Mammary epithelial cell (primary cell): ENCODE measurements at regions of chr19 and their contacts with region 1.

Region 1: GRCh38 chr19:33373701-33374421 is at the start of gene CEBPG:
- DNase-seq: peak; percentile 58
- H3K4me3 ChIP-seq: peak within 1 kb of the TSS; percentile 77 to 98 (median 96)
- H3K27ac ChIP-seq: peak within 1 kb of the TSS; percentile 96
- H3K4me1 ChIP-seq: peaks cover 45% of the 10 kb centered on the region
- H3K27me3 ChIP-seq: no peaks in the 10 kb centered on the region
- CTCF ChIP-seq: peak in 1 of 2 donors; percentile 16
- total RNA-seq, gene CEBPG: 39.5 to 50.0 TPM

Region 2: GRCh38 chr19:33176670-33177416 is 197.0 kb before region 1 on chr19:
- CTCF ChIA-PET with region 1: interaction called, 5 read pairs
- dilution Hi-C with region 1: no loop called
- in situ Hi-C with region 1: no loop called
- intact Hi-C with region 1: loop called (anchors 1 kb)
- DNase-seq: peak; percentile 98
- H3K4me3 ChIP-seq: peak overlapping the region; percentile 56 to 80 (median 68)
- H3K27ac ChIP-seq: peak overlapping the region; percentile 74
- H3K4me1 ChIP-seq: peaks cover 18% of the 10 kb centered on the region
- H3K27me3 ChIP-seq: no peaks in the 10 kb centered on the region
- CTCF ChIP-seq: peak in 1 of 2 donors; percentile 20

Region 3: DNA sequence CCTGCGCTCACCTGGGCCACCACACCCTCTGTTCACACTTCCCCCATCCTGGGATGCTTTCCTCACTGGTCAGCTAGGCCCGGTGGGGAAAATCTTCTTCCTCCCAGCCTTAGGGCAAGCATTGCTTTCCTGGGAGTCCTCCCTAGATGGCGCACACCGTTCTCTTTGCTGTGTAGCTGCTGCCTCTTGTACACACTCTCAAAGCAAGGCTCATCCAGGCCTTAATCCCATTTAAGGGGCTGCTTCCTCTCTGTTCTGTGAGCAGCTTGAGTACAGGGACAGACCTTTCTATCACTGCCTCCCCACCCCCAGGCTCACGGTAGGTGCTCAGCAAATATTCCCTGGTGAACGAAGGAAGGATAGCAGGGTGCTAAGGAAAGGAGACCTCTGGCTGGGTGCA is 159.3 kb before region 1 on chr19:
- CTCF ChIA-PET with region 1: no interaction called
- dilution Hi-C with region 1: no loop called
- in situ Hi-C with region 1: no loop called
- intact Hi-C with region 1: no loop called
- DNase-seq: peak; percentile 14
- H3K4me3 ChIP-seq: no peak overlapping the region
- H3K27ac ChIP-seq: no peak overlapping the region
- H3K4me1 ChIP-seq: peaks cover 5% of the 10 kb centered on the region
- H3K27me3 ChIP-seq: no peaks in the 10 kb centered on the region
- CTCF ChIP-seq: peak in 1 of 2 donors; percentile 29

Region 4: GRCh38 chr19:33292595-33293441 is 81.0 kb before region 1 on chr19:
- CTCF ChIA-PET with region 1: no interaction called
- dilution Hi-C with region 1: no loop called
- in situ Hi-C with region 1: loop called in 1 of 2 experiments (anchors 10 kb)
- intact Hi-C with region 1: no loop called
- DNase-seq: no peak
- H3K4me3 ChIP-seq: no peak overlapping the region
- H3K27ac ChIP-seq: peak overlapping the region; percentile 53
- H3K4me1 ChIP-seq: peaks cover 38% of the 10 kb centered on the region
- H3K27me3 ChIP-seq: no peaks in the 10 kb centered on the region
- CTCF ChIP-seq: peak in 1 of 2 donors; percentile 6

Region 5: DNA sequence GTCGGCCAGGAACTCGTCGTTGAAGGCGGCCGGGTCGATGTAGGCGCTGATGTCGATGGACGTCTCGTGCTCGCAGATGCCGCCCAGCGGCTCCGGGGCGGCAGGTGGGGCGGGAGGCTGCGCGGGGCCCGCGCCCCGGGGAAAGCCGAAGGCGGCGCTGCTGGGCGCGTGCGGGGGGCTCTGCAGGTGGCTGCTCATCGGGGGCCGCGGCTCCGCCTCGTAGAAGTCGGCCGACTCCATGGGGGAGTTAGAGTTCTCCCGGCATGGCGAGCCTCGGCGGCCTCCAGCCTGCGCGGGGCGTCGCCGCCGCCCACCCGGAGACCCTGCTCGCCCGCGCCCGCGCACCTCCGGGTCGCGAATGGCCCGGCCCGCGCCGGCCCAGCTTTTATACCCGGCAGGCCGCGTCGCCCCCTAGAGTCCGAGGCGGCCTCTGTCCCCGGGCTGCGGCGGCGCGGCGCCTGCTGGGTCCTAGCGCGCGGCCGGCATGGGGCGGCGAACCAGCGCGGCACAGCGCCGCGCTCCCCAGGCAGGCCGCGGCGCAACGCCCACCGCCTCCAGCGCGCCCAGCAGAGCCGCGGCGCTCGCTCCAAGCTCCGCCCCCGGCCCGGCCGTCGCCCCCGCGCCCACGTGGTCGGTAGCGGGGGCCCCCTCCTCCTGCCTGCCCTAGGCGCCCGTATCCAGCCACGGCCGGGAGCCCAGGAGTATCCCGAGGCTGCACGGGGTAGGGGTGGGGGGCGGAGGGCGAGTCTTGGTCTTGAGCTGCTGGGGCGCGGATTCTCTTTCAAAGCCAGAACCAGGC is 71.5 kb before region 1 on chr19 and contains the start of gene CEBPA:
- CTCF ChIA-PET with region 1: interaction called, 3 read pairs
- dilution Hi-C with region 1: no loop called
- in situ Hi-C with region 1: loop called in 1 of 2 experiments (anchors 10 kb)
- intact Hi-C with region 1: loop called (anchors 2 kb)
- DNase-seq: peak; percentile 78
- H3K4me3 ChIP-seq: peak within 1 kb of the TSS; percentile 66 to 71 (median 67)
- H3K27ac ChIP-seq: no peak within 1 kb of the TSS
- H3K4me1 ChIP-seq: peaks cover 45% of the 10 kb centered on the region
- H3K27me3 ChIP-seq: peaks cover 10% of the 10 kb centered on the region
- CTCF ChIP-seq: peak; percentile 34 to 53
- total RNA-seq, gene CEBPA: 2.8 to 3.3 TPM

Region 6: GRCh38 chr19:33332248-33332647 is 41.6 kb before region 1 on chr19:
- CTCF ChIA-PET with region 1: interaction called, 3 read pairs
- dilution Hi-C with region 1: no loop called
- in situ Hi-C with region 1: no loop called
- intact Hi-C with region 1: loop called (anchors 5 kb)
- DNase-seq: no peak
- H3K4me3 ChIP-seq: no peak overlapping the region
- H3K27ac ChIP-seq: no peak overlapping the region
- H3K4me1 ChIP-seq: no peaks in the 10 kb centered on the region
- H3K27me3 ChIP-seq: no peaks in the 10 kb centered on the region
- CTCF ChIP-seq: no peak

Region 7: DNA sequence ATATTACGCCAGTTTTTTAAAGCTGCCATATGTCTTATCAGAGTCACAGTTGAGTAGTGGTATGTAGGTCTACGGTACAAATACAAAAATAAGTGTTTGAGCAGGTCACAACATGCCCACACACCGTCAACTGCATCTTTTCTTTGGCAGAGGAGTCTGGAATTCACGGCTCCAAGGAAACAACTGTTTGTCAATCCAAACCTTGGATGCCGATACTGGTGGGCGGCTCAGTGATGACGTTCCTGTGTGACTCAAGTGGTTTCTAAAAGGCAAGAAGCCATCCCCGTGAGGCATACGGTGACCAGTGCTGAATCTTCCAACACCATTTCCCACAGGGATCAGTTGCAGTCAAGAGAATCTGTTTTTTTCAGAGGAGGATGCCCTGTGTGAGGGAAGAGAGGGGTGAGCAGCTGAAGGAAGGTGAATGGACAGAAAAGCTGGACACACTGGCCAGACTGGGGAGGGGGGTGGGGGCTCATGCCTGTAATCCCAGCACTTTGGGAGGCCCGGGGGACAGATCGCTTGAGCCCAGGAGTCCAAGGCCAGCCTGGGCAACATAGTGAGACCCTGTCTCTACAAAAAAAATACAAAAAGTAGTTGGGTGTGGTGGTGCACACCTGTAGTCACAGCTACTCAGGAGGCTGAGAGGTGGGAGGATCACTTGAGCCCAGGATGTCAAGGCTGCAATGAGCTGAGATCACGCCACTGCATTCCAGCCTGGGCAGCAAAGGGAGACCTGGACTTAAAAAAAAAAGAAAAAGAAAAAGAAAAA is 23.1 kb before region 1 on chr19:
- CTCF ChIA-PET with region 1: no interaction called
- dilution Hi-C with region 1: no loop called
- in situ Hi-C with region 1: no loop called
- intact Hi-C with region 1: loop called (anchors 1 kb)
- DNase-seq: peak; percentile 100
- H3K4me3 ChIP-seq: peak overlapping the region in 1 of 3 experiments; percentile 6
- H3K27ac ChIP-seq: peak overlapping the region; percentile 81
- H3K4me1 ChIP-seq: peaks cover 17% of the 10 kb centered on the region
- H3K27me3 ChIP-seq: no peaks in the 10 kb centered on the region
- CTCF ChIP-seq: no peak

Region 8: DNA sequence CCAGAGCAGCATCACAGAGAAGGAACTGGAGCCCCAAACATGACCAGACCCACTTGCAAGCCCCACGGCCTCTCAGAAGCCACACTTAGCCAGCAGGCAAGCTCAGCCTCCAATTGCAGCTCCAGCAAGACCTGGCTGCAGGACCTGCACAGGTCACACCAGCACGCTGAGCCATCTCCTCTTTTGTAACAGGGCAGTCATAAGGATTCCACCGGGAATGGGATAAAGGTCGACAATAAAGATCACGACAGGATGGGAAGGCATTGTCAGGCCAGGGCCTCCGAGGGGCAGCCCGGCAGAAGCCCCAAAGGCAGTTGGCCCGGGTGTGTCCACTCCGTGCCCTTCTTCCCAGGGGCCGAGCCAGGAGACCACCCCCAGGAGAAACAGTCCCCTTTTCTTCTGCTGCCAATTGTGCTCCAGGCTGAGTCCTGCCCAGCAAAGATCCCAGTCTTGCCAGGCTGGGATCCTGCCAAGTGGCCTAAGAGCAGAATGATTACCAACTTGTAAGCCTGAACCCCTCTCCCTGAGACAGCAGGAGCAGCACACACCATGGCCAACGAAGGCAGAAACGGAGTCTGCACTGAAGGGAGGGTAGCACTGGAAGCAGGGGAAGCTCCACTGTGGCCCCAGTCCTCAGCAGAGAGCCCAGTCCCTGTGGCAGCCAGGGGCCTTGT is 135.2 kb after region 1 on chr19:
- CTCF ChIA-PET with region 1: no interaction called
- dilution Hi-C with region 1: no loop called
- in situ Hi-C with region 1: no loop called
- intact Hi-C with region 1: no loop called
- DNase-seq: no peak
- H3K4me3 ChIP-seq: no peak overlapping the region
- H3K27ac ChIP-seq: no peak overlapping the region
- H3K4me1 ChIP-seq: peaks cover 8% of the 10 kb centered on the region
- H3K27me3 ChIP-seq: no peaks in the 10 kb centered on the region
- CTCF ChIP-seq: no peak

Region 9: DNA sequence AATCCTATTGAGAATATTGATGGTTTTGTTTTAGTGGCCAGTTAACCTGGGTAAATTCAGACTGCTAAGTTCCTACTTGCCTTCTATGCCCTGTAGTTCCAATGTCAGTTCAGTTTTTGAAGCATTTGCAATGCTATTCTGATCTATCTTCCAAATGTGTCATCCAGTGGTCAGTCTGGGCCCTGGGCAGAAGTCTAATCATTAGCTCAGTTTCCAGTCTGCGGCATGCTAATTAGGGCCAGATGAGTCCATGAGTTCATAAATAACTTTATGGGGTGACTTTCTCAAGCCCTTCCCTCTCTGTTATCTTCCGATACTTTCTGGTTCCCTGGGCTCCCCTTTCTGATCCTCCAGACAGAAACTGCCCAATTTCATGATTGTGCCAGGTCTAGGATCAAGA is 1822.0 kb after region 1 on chr19:
- CTCF ChIA-PET with region 1: no interaction called
- dilution Hi-C with region 1: no loop called
- in situ Hi-C with region 1: no loop called
- intact Hi-C with region 1: no loop called
- DNase-seq: no peak
- H3K4me3 ChIP-seq: no peak overlapping the region
- H3K27ac ChIP-seq: no peak overlapping the region
- H3K4me1 ChIP-seq: no peaks in the 10 kb centered on the region
- H3K27me3 ChIP-seq: peaks cover 3% of the 10 kb centered on the region
- CTCF ChIP-seq: no peak